SK-N-SH (cell line): ENCODE measurements at regions of chr12 and their contacts with region 1.

Region 1: GRCh38 chr12:56007564-56008559 is 10.8 kb downstream of the SUOX start:
- DNase-seq: peak; percentile 96
- H3K4me3 ChIP-seq: peak overlapping the region; percentile 66 to 72
- H3K27ac ChIP-seq: peak overlapping the region; percentile 52 to 88
- H3K4me1 ChIP-seq: peaks cover 0 to 8% of the 10 kb centered on the region in 2 experiments; a peak in 1 of 4 replicates
- H3K27me3 ChIP-seq: no peaks in the 10 kb centered on the region
- CTCF ChIP-seq: no peak
- EP300 ChIP-seq: no peak
- RAD21 ChIP-seq: no peak

Region 2: GRCh38 chr12:56020423-56021184 is 12.7 kb after region 1 on chr12 and contains the start of gene IKZF4:
- CTCF ChIA-PET with region 1: interaction called, 14 read pairs
- POLR2A ChIA-PET with region 1: interaction called, 9 read pairs
- DNase-seq: peak; percentile 68
- H3K4me3 ChIP-seq: peak within 1 kb of the TSS; percentile 36 to 54
- H3K27ac ChIP-seq: peak within 1 kb of the TSS in 1 of 2 experiments; percentile 83; a peak in 3 of 4 replicates
- H3K4me1 ChIP-seq: peaks cover 0 to 24% of the 10 kb centered on the region in 2 experiments; a peak in 2 of 4 replicates
- H3K27me3 ChIP-seq: no peaks in the 10 kb centered on the region
- CTCF ChIP-seq: no peak
- EP300 ChIP-seq: no peak
- RAD21 ChIP-seq: no peak
- polyA plus RNA-seq, gene IKZF4: 2.0 and 3.9 TPM in 2 replicates

Region 3: DNA sequence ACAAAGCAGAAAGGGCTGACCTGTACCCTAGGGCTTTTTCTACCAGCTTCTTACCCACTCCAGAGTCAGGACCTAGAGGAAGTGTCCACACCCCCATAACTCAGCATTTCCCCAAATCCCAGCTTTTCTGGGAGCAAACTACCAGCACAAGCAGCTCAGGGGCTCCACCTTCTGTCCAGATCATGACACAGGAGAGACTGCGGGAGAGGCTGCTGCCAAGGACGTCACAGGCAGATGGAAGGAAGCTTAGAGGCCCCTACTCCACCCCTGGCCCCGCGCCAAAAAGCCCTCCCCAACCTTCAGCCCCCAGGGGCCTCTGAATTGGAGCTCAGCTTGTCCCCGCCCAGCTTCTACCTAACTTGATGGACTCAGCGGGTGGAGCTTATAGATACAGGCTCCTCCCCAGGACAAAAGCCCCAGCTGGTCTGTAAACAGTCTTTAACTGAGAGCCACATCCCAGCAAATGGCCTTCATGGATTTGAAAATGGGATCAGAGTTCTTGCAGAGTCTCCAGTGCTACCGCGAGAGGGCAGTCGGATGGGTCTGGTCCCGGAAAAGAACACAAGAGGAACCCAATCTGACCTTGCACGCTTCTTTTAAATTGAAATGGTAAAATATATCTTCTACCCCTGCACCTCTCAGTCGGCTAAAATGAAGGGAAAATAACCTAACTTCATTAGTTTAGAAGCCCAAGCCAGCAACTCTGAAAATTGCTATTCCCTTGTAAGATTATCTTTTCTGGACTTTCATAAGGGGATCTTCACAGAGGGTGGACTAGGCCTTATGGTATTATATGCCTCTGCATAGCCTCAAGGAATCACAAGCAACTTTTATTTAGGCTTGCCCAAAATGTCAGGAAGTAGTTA is 629.0 kb after region 1 on chr12:
- CTCF ChIA-PET with region 1: no interaction called
- POLR2A ChIA-PET with region 1: no interaction called
- DNase-seq: peak; percentile 92
- H3K4me3 ChIP-seq: peak overlapping the region; percentile 90 to 95
- H3K27ac ChIP-seq: peak overlapping the region; percentile 94 to 96
- H3K4me1 ChIP-seq: peaks cover 25 to 44% of the 10 kb centered on the region in 2 experiments
- H3K27me3 ChIP-seq: no peaks in the 10 kb centered on the region
- CTCF ChIP-seq: peak; percentile 75
- EP300 ChIP-seq: 0 out of 4 replicates have a peak, but pooled peaks have one; percentile 19 to 20
- RAD21 ChIP-seq: peak; percentile 80